Posterior vena cava (tissue), 2 donors: ENCODE measurements at regions of chr18 and their contacts with region 1.

Region 1: GRCh38 chr18:65439188-65439587 is 311.6 kb upstream of the CDH7 start:
- DNase-seq: no peak

Region 2: DNA sequence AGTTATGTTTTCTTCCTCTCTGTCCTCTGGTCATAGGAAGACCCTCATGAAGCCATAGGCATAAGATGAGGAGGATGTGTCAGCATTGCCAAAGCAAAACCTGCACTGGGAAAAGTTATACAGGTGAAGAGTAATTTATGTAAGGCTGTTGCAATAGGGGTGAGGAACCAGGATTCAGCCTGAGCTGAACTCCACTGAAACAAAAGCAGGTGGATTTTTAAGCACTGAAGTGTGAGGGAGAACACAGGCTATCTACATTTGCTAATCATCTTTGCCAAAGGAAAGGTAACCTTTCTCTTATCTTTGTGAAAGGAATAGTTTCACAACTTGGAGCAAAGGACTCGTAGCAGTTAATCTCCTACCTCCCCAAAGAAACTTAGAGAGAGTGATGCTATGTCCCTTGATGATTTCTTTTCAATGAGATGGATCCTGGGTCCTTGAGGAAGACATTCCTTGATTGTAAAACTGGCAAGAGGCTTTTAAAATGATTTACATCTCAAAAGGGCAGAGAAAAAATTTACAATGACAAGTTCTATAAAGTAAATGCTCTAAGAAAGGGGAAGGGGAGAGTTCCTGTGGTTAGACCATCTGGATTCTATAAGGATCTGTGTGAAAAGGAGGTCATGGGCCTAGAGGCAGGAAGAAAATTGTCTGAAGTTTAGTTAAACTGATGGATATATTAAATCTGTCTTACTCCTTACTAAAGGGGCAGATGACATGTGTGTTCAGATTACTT is 73.8 kb before region 1 on chr18:
- intact Hi-C with region 1: no loop called
- DNase-seq: no peak

Region 3: GRCh38 chr18:65409261-65409660 is 29.9 kb before region 1 on chr18:
- intact Hi-C with region 1: loop called in 1 of 2 experiments (anchors 2 kb)
- DNase-seq: no peak